ENCODE measurements at regions of chr9 and their contacts with region 1.

Region 1: DNA sequence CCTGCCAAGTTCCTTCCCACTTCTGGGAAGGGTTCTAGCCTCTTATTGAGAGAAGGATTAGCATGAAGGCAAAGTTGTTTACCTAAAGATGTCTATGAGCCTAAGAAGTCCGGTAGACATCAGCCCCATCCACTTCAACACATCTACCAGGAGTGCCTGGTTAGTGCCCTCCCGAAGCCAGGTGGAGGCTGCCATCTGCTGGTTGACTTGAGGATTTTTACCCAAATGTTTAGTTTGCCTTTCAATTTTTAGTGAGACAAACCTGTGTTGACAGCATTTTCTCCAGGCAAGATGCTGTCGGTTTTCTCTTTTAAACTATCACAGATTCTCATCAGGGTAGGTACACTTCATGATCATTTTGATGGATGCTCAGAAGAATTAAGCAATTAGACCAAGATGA is 83.6 kb upstream of the TNFSF8 start:
- DNase-seq: peak; percentile 56
- H3K4me3 ChIP-seq: no peak overlapping the region
- H3K27ac ChIP-seq: no peak overlapping the region
- H3K4me1 ChIP-seq: no peaks in the 10 kb centered on the region
- H3K27me3 ChIP-seq: no peaks in the 10 kb centered on the region
- CTCF ChIP-seq: peak; percentile 60 to 88 (median 80)
- POLR2A ChIP-seq: no peak

Region 2: DNA sequence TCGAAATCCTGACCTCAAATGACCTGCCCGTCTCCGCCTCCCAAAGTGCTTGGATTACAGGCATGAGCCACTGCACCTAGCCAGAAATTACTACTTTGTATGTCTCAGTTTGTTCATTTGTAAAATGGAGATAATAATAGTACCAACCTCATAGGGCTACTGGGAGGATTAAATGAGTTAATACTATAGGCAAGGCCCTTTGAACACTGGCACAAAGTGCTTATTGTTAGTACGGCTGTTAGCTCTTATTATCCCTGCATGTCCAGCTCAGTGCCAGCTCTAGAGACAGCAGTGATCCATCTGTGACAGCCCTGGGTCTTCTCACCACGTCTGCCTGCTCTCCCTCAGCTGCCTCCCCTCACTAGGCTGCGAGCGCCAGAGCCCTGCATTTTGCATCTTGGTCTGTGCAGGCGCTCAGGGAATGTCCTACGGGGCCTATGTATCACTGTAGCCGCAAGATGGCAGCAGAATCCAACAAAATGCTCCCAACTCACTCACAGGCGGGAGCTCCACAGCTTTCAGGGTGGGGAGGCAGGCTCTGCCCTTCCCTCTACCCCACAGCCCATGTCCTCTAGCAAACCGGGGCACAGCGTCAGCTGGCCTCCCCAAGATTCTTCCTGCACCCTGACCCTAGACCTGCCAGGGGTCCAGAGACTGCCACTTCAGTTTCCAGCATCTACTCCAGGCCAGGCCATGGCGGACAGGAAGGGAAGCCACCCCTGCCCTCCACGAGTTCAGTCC is 608.5 kb before region 1 on chr9:
- intact Hi-C with region 1: loop called (anchors 10 kb)
- DNase-seq: peak; percentile 73
- H3K4me3 ChIP-seq: no peak overlapping the region
- H3K27ac ChIP-seq: no peak overlapping the region
- H3K4me1 ChIP-seq: no peaks in the 10 kb centered on the region
- H3K27me3 ChIP-seq: no peaks in the 10 kb centered on the region
- CTCF ChIP-seq: peak; percentile 19 to 82 (median 72)
- POLR2A ChIP-seq: no peak

Region 3: DNA sequence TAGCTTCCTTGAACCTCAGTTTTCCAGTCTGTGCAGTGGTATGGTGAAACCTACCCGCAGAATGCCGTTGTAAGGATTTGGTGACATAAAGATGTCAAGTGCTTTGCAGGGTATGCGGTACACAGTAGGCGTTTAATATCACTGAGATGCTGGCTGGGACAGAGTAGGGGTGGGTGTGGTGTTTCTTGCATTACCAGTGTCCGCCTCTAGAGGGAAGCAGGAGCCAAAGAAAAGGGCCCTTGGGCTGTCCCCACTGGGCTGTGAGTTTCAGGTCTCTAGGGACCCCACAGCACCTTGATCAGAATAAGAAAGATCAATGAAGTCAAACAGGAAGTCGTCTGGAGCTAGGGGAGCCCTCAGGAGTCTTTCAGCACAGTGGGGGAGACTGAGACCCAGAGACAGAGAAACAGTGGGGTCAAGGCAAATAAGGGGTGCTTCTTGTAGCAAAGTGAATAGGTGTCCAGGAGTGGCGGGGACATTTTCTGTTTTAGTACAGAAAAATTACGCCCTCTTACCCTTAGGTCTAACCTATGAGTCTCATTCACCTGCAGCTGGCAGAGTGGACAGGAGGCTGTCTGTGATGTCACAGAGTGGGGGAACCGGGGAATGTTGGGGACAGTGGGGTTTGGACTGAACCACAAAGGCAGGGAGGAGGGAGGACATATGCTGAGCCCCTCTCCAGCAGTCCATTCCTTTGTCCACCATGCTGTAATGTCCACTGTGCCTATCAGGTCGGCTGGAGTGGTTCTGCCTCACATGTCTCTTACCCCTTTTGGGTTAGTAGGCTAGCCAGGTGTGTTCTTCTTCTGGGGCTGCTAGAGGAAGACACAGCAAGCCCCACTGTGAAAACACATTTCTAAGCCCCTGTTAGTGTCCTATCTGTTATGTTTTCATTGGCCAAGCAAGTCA is 351.7 kb before region 1 on chr9:
- intact Hi-C with region 1: loop called (anchors 5 kb)
- DNase-seq: no peak
- H3K4me3 ChIP-seq: no peak overlapping the region
- H3K27ac ChIP-seq: no peak overlapping the region
- H3K4me1 ChIP-seq: no peaks in the 10 kb centered on the region
- H3K27me3 ChIP-seq: no peaks in the 10 kb centered on the region
- CTCF ChIP-seq: peak; percentile 50 to 67 (median 57)
- POLR2A ChIP-seq: no peak

Region 4: GRCh38 chr9:114681594-114682332 is 332.2 kb before region 1 on chr9 and contains the start of gene TEX48:
- intact Hi-C with region 1: loop called (anchors 5 kb)
- DNase-seq: peak; percentile 52
- H3K4me3 ChIP-seq: no peak within 1 kb of the TSS
- H3K27ac ChIP-seq: no peak within 1 kb of the TSS
- H3K4me1 ChIP-seq: no peaks in the 10 kb centered on the region
- H3K27me3 ChIP-seq: no peaks in the 10 kb centered on the region
- CTCF ChIP-seq: peak; percentile 9 to 59 (median 49)
- POLR2A ChIP-seq: no peak
- total RNA-seq, gene TEX48: not detected

Region 5: GRCh38 chr9:114738581-114739316 is 275.2 kb before region 1 on chr9:
- intact Hi-C with region 1: loop called (anchors 2 kb)
- DNase-seq: peak; percentile 66
- H3K4me3 ChIP-seq: no peak overlapping the region
- H3K27ac ChIP-seq: no peak overlapping the region
- H3K4me1 ChIP-seq: no peaks in the 10 kb centered on the region
- H3K27me3 ChIP-seq: no peaks in the 10 kb centered on the region
- CTCF ChIP-seq: peak; percentile 75 to 94 (median 92)
- POLR2A ChIP-seq: no peak

Region 6: GRCh38 chr9:114911167-114911821 is 102.7 kb before region 1 on chr9:
- intact Hi-C with region 1: loop called (anchors 5 kb)
- DNase-seq: peak; percentile 30
- H3K4me3 ChIP-seq: no peak overlapping the region
- H3K27ac ChIP-seq: no peak overlapping the region
- H3K4me1 ChIP-seq: peaks cover 3% of the 10 kb centered on the region
- H3K27me3 ChIP-seq: no peaks in the 10 kb centered on the region
- CTCF ChIP-seq: peak; percentile 26 to 80 (median 76)
- POLR2A ChIP-seq: no peak

Region 7: GRCh38 chr9:115524453-115525059 is 510.6 kb after region 1 on chr9:
- intact Hi-C with region 1: loop called (anchors 2 kb)
- DNase-seq: peak; percentile 36
- H3K4me3 ChIP-seq: no peak overlapping the region
- H3K27ac ChIP-seq: no peak overlapping the region
- H3K4me1 ChIP-seq: peaks cover 6% of the 10 kb centered on the region
- H3K27me3 ChIP-seq: no peaks in the 10 kb centered on the region
- CTCF ChIP-seq: peak; percentile 27 to 80 (median 74)
- POLR2A ChIP-seq: no peak